Left lung (tissue), 14 donors: ENCODE measurements at regions of chr9 and their contacts with region 1.

Region 1: DNA sequence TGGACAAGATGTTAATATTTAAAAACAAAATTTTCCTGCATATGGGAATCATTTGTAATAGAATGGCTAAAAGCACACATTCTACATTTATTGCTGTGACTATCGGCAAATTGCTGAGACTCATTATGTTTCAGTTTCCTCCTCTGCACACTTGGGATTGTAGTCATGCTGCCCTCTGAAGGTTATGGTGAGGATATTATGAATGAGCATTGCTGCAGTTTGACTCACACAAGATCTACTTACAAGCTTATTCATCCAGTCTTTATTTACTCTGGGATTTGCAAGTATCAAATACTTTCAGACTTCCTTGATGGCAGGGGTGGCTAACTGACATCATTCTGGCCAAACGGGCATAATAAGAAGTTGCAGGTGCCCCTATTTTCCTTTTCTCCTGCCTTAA is 9.5 kb upstream of the NFIL3 start:
- DNase-seq: no peak
- ATAC-seq: peak; percentile 95
- H3K4me3 ChIP-seq: no peak overlapping the region
- H3K27ac ChIP-seq: no peak overlapping the region
- H3K4me1 ChIP-seq: peaks cover 9 to 29% of the 10 kb centered on the region in 2 donors
- H3K27me3 ChIP-seq: no peaks in the 10 kb centered on the region
- CTCF ChIP-seq: peak; percentile 21 to 30

Region 2: GRCh38 chr9:90914868-90915483 is 518.2 kb before region 1 on chr9:
- intact Hi-C with region 1: loop called in 1 of 2 experiments (anchors 10 kb)
- DNase-seq: peak; percentile 60 to 91 (median 82)
- ATAC-seq: peak; percentile 98
- H3K4me3 ChIP-seq: no peak overlapping the region
- H3K27ac ChIP-seq: no peak overlapping the region
- H3K4me1 ChIP-seq: no peaks in the 10 kb centered on the region
- H3K27me3 ChIP-seq: peaks cover 0 to 7% of the 10 kb centered on the region in 2 donors
- CTCF ChIP-seq: peak; percentile 86 to 95